Caco-2 (cell line): ENCODE measurements at regions of chr12 and their contacts with region 1.

Region 1: DNA sequence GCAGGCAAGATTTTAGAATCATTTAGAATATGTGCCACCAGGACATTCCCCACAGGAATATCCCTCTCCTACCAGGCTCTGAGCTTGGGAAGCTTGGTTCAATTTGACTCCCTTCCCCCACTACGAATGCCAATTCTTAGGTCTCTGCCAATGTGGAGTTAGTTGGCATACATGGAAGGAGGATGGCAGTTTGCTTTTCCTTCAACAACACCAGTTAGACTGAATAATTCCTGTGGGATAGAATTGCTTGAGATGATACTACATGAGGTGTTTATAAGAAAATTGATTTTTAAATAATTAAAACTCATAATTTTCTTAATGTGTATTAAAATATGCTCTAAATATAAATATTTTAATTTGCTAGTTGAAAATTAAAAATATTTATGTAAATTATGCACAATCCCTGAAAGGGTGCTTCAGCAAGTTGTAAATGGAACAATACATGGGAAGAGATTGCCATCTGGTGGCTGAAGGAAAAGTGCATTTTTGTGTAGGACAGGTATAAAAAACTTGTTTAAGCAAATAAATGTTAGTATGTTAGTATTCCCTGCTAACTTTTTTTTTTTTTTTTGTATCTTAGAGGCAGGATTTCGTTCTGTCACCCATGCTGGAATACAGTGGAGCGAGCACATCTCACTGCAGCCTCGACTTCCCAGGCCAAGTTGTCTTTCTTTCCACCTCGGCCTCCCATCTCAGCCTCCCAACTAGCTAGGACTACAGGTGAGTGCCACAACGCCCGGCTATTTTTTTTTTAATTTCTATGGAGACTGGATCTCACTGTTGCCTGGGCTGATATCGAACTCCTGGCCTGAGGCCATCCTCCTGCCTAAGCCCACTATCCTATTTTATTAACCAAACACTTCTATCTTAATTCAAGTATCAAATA is 25.8 kb upstream of the STRAP start:
- DNase-seq: peak; percentile 54 to 75
- H3K4me3 ChIP-seq: no peak overlapping the region
- H3K4me3 Mint-ChIP-seq: no peak overlapping the region
- H3K27ac Mint-ChIP-seq: no peak overlapping the region
- H3K4me1 ChIP-seq: no peaks in the 10 kb centered on the region
- H3K4me1 Mint-ChIP-seq: peaks cover 6% of the 10 kb centered on the region
- H3K27me3 ChIP-seq: no peaks in the 10 kb centered on the region
- H3K27me3 Mint-ChIP-seq: peaks cover 7% of the 10 kb centered on the region
- CTCF ChIP-seq: peak; percentile 86 to 97

Region 2: DNA sequence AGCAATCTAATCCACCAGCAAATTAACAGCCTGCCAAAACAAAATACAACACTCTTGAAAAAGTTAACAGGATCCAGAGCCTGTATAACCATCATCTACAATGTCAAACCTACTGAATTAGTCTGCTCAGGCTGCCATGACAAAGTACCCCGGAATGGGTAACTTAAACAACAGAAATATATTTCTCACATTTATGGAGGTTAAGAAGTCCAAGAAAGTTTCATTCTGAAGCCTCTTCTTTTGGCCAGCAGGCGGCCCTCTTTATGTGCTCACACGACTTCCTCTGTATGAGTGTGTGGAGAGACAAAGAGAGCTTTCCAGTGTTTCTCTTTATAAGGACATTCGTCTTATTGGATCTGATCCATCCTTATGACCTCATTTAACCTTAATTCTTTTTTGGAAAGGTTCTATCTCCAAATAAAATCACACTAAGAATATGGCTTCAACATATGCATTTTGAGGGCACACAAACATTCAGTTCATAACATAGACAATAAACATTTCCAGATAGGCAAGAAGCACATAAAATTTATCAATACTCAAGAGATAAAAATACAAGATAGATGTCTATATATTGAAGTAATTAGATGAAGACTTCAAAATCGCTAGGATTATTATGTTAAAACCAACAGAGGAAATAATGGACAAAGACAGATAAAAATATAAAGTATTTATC is 629.2 kb before region 1 on chr12:
- CTCF ChIA-PET with region 1: no interaction called
- POLR2A ChIA-PET with region 1: no interaction called
- intact Hi-C with region 1: loop called (anchors 2 kb)
- DNase-seq: peak; percentile 41 to 50
- H3K4me3 ChIP-seq: no peak overlapping the region
- H3K4me3 Mint-ChIP-seq: no peak overlapping the region
- H3K27ac Mint-ChIP-seq: no peak overlapping the region
- H3K4me1 ChIP-seq: no peaks in the 10 kb centered on the region
- H3K4me1 Mint-ChIP-seq: no peaks in the 10 kb centered on the region
- H3K27me3 ChIP-seq: no peaks in the 10 kb centered on the region
- H3K27me3 Mint-ChIP-seq: peaks cover 9% of the 10 kb centered on the region
- CTCF ChIP-seq: peak; percentile 82 to 85

Region 3: DNA sequence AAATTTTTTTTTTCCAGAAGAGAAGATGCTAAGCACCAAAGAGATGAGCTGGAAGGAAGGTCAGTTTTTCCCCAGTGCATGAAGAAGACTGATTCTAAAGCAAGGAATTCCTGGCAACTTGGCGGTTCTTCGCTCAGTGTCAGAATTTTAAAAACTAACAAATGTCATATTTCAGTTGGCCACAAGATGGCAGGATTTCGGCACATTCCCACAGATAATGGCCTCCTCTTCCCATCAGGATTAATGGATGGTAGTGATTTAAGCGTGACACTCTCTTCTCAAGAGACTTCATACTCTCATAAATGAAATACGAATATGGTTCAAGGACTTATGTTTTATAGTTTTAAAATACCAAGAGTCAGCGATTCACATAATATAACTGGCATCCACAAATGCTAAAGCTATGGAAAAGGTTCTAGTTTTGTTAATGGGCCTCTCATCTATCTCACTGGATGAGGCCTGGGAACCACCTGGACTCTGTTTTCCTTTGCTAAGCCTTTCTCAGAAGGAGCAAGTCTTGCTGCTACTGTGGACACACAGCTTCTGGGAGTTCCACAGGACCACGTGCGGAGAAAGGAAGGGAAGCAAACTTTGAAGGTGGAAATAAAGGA is 580.1 kb before region 1 on chr12:
- CTCF ChIA-PET with region 1: no interaction called
- POLR2A ChIA-PET with region 1: no interaction called
- intact Hi-C with region 1: loop called (anchors 1 kb)
- DNase-seq: peak in 1 of 2 experiments; percentile 69
- H3K4me3 ChIP-seq: no peak overlapping the region
- H3K4me3 Mint-ChIP-seq: no peak overlapping the region
- H3K27ac Mint-ChIP-seq: no peak overlapping the region
- H3K4me1 ChIP-seq: no peaks in the 10 kb centered on the region
- H3K4me1 Mint-ChIP-seq: no peaks in the 10 kb centered on the region
- H3K27me3 ChIP-seq: no peaks in the 10 kb centered on the region
- H3K27me3 Mint-ChIP-seq: peaks cover 8% of the 10 kb centered on the region
- CTCF ChIP-seq: peak; percentile 61 to 83

Region 4: DNA sequence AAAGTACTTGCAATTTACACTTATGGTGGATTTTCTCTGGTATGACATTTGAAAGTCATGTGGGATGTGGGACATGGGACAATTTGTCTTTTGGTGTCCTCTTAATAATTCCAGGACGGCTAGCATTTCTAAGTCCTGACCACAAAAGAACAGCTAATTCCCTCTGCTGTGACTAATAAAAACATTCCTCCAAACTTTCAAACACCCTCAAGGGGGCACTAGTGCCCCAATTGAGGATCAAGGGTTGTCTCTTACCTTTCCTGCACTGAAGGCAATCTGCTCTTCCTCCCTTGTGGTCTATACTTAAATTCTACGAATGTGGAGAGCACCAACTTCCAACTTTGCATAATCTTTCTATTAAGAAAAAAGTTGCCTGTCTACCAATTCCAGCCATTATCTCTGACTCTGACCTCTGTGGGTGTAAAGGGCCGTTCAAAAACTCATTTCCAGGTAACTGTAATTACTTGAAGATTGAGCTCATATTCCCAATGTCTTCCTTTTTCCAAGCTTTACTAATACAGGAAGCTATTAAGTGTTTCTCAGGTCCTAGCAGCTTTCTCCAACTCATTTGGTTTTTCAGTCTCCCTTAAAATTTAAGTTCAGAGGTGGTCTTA is 323.9 kb before region 1 on chr12:
- CTCF ChIA-PET with region 1: interaction called, 9 read pairs
- POLR2A ChIA-PET with region 1: no interaction called
- intact Hi-C with region 1: loop called (anchors 1 kb)
- DNase-seq: peak; percentile 48 to 69
- H3K4me3 ChIP-seq: no peak overlapping the region
- H3K4me3 Mint-ChIP-seq: no peak overlapping the region
- H3K27ac Mint-ChIP-seq: no peak overlapping the region
- H3K4me1 ChIP-seq: no peaks in the 10 kb centered on the region
- H3K4me1 Mint-ChIP-seq: no peaks in the 10 kb centered on the region
- H3K27me3 ChIP-seq: 0 out of 2 replicates have a peak, but pooled peaks cover 1% of the 10 kb centered on the region
- H3K27me3 Mint-ChIP-seq: peaks cover 5% of the 10 kb centered on the region
- CTCF ChIP-seq: peak; percentile 50 to 74

Region 5: GRCh38 chr12:15590180-15590826 is 266.0 kb before region 1 on chr12:
- CTCF ChIA-PET with region 1: interaction called, 3 read pairs
- POLR2A ChIA-PET with region 1: no interaction called
- intact Hi-C with region 1: loop called (anchors 1 kb)
- DNase-seq: peak; percentile 60 to 79
- H3K4me3 ChIP-seq: peak overlapping the region; percentile 17
- H3K4me3 Mint-ChIP-seq: peak overlapping the region; percentile 66
- H3K27ac Mint-ChIP-seq: peak overlapping the region; percentile 45
- H3K4me1 ChIP-seq: no peaks in the 10 kb centered on the region
- H3K4me1 Mint-ChIP-seq: peaks cover 15% of the 10 kb centered on the region
- H3K27me3 ChIP-seq: no peaks in the 10 kb centered on the region; the same call in 1 of the 2 replicates
- H3K27me3 Mint-ChIP-seq: peaks cover 9% of the 10 kb centered on the region
- CTCF ChIP-seq: peak; percentile 94 to 96

Region 6: DNA sequence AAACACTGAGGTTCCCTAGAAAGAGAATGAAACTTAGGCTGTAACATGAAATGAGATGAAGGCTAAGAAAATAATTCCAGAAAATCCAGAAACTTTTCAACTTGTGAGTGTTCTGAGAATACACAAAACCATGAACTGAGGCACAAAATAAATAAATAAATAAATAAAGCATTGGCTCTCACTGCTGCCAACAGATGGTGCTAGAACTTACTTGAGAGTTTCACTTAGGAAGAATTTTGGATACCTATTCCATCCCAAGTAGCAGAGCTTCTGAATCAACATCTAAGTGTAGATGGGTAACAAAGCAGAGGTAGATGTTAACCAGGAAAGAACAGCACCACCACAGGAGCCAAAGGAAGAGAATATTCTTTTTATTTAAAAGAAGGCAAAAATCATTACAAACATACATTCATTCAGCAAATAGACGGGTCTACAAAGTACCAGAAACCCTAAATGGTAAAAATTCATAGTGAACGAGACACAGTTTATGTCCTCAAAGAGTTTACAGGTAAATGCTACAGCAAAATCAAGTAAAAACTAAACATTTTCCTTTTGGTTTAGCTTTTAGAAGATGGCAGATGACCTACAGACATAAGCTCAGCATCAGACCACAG is 83.8 kb before region 1 on chr12:
- CTCF ChIA-PET with region 1: interaction called, 7 read pairs
- POLR2A ChIA-PET with region 1: no interaction called
- intact Hi-C with region 1: loop called (anchors 1 kb)
- DNase-seq: peak in 1 of 2 experiments; percentile 39
- H3K4me3 ChIP-seq: no peak overlapping the region
- H3K4me3 Mint-ChIP-seq: no peak overlapping the region
- H3K27ac Mint-ChIP-seq: no peak overlapping the region
- H3K4me1 ChIP-seq: no peaks in the 10 kb centered on the region
- H3K4me1 Mint-ChIP-seq: no peaks in the 10 kb centered on the region
- H3K27me3 ChIP-seq: no peaks in the 10 kb centered on the region
- H3K27me3 Mint-ChIP-seq: peaks cover 1% of the 10 kb centered on the region
- CTCF ChIP-seq: peak; percentile 74 to 77

Region 7: DNA sequence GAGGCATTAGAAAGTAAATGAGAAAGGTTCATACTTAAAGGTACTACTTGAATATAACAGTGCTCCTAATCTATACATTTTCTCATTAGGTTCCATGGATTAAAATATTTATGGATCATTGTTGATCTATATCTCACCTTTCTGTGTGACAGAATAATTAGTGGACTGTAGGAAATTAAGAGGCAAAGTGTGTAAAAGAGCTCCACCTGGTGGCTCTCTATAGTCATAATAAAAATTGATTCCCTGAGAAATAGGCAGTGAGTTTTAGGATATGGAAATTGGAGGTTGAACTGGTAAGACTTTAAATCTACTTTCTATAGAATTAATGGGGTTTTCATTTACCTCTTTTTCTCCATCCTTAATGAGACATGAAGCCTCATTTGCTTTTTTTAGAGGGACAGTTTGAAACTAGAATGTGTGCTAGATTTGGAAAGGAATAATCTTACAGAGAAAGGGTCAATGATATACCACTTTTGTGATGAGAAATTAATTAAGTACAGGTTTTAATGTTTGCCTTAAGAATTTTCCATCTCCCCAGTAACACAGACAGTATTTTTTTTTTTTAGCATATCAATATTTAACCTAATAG is 43.0 kb after region 1 on chr12:
- CTCF ChIA-PET with region 1: interaction called, 5 read pairs
- POLR2A ChIA-PET with region 1: no interaction called
- intact Hi-C with region 1: loop called (anchors 1 kb)
- DNase-seq: peak in 1 of 2 experiments; percentile 38
- H3K4me3 ChIP-seq: no peak overlapping the region
- H3K4me3 Mint-ChIP-seq: no peak overlapping the region
- H3K27ac Mint-ChIP-seq: no peak overlapping the region
- H3K4me1 ChIP-seq: no peaks in the 10 kb centered on the region
- H3K4me1 Mint-ChIP-seq: no peaks in the 10 kb centered on the region
- H3K27me3 ChIP-seq: no peaks in the 10 kb centered on the region
- H3K27me3 Mint-ChIP-seq: no peaks in the 10 kb centered on the region
- CTCF ChIP-seq: peak; percentile 70 to 88

Region 8: DNA sequence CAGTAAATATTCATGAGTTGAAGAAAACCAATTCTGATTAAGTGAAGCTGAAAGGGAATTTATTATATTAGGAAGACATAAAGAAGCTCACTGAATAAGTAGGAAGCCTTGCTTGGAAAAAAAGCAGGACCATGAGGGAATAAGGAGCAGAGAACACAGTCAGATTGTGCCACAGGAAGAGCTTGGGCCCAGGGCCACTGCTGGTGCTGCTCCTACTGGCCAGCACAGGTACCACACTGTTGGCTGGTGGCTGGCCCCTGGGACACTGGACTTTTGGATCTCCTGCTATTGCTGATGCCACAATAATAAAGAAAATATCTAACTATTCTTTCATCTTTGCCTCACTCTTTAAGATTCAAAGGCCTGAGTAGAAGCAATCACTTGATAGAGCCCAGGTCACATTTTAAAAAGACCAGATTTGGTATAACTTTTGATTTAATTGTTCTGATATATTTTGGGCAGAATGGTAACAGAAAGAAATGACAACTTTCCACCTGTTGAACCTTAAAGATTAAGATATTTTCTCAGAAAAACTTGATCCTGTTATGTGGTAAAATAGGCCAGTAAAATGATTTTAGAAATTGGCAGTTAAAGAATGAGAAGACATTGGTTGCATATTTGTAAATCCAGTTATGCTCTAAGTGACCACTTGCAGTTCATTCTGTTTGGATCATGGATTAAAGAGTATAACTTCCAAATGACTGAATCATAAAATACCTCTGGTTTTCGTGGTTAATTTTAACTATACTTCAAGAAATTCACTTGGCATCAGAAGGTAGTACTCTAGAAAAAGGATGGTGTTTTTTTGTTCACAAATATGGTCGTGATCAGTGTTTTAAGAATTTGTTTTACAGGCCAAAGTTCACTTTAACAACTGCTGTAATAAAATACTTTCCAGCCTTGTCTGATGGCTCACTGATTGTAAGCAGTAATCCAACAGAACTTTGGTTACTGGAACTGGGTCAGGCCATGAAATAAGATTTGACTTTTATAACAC is 123.1 kb after region 1 on chr12:
- CTCF ChIA-PET with region 1: no interaction called
- POLR2A ChIA-PET with region 1: no interaction called
- intact Hi-C with region 1: no loop called
- DNase-seq: peak; percentile 52 to 56
- H3K4me3 ChIP-seq: no peak overlapping the region
- H3K4me3 Mint-ChIP-seq: peak overlapping the region; percentile 13
- H3K27ac Mint-ChIP-seq: peak overlapping the region; percentile 80
- H3K4me1 ChIP-seq: peaks cover 49% of the 10 kb centered on the region
- H3K4me1 Mint-ChIP-seq: peaks cover 38% of the 10 kb centered on the region
- H3K27me3 ChIP-seq: no peaks in the 10 kb centered on the region
- H3K27me3 Mint-ChIP-seq: no peaks in the 10 kb centered on the region
- CTCF ChIP-seq: peak; percentile 44 to 84